ENCODE measurements at regions of chr1 and their contacts with region 1.

Region 1: GRCh38 chr1:153749408-153750005 is 21.7 kb downstream of the INTS3 start:
- DNase-seq: peak; percentile 67 to 97 (median 82)

Region 2: GRCh38 chr1:153677718-153678505 is 71.6 kb before region 1 on chr1:
- intact Hi-C with region 1: loop called (anchors 1 kb)
- DNase-seq: peak in 8 of 10 donors; percentile 37 to 89 (median 46)

Region 3: GRCh38 chr1:153805042-153805745 is 55.7 kb after region 1 on chr1:
- intact Hi-C with region 1: no loop called
- DNase-seq: peak in 1 of 10 donors; percentile 9